ENCODE measurements at regions of chr9 and their contacts with region 1.

Region 1: GRCh38 chr9:21812946-21813568 is 10.6 kb downstream of the MTAP start:
- DNase-seq: peak in 3 of 4 donors; percentile 64 to 87 (median 68)
- ATAC-seq: peak; percentile 92
- H3K4me3 ChIP-seq: no peak overlapping the region
- H3K27ac ChIP-seq: no peak overlapping the region
- H3K4me1 ChIP-seq: peaks cover 0 to 28% of the 10 kb centered on the region in 2 donors
- H3K27me3 ChIP-seq: no peaks in the 10 kb centered on the region
- CTCF ChIP-seq: peak; percentile 82 to 89

Region 2: GRCh38 chr9:21684831-21685362 is 128.2 kb before region 1 on chr9:
- intact Hi-C with region 1: no loop called
- DNase-seq: peak in 2 of 4 donors; percentile 6 to 56
- ATAC-seq: peak; percentile 94
- H3K4me3 ChIP-seq: no peak overlapping the region
- H3K27ac ChIP-seq: no peak overlapping the region
- H3K4me1 ChIP-seq: no peaks in the 10 kb centered on the region
- H3K27me3 ChIP-seq: no peaks in the 10 kb centered on the region
- CTCF ChIP-seq: no peak

Region 3: GRCh38 chr9:21728781-21729180 is 84.3 kb before region 1 on chr9:
- intact Hi-C with region 1: no loop called
- DNase-seq: no peak
- ATAC-seq: no peak
- H3K4me3 ChIP-seq: no peak overlapping the region
- H3K27ac ChIP-seq: no peak overlapping the region
- H3K4me1 ChIP-seq: no peaks in the 10 kb centered on the region
- H3K27me3 ChIP-seq: peaks cover 14 to 59% of the 10 kb centered on the region in 2 donors
- CTCF ChIP-seq: no peak

Region 4: DNA sequence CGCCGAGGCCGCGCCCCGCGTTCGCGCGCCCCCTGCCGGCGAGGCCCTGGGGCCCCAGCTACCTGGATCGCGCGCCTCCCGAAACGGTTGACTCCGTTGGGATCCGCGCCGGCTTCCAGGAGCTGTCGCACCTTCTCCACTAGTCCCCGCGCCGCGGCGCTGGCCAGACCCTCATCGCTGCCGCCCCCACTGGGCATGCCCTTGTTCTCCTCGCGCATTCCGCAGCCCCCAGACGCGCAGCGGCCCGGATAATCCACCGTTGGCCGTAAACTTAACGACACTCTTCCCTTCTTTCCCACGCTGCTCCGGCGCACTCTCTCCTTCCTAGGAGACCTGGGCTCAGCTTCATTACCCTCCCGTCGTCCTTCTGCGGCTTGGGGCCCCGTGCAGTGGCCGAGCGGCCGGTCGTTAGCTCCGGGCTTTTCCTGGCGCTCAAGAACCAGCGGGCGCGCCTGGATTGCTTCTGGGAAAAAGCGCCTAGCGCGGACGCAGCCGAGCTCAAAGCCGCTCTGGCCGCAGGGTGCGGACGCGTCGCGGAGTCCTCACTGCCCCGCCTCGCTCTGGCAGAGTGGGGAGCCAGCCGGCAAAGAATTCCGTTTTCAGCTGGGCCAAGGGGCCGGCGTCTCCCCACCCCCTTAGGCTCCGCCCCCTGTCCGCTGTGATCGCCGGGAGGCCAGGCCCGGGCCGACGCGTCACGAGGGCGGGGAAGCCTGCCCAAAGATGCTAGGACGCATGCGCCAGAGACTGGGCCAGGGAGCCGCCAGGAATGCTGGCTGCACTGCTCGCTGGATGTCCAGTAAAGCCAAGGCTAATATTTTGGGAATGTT is 195.9 kb after region 1 on chr9 and contains the start of gene CDKN2B:
- intact Hi-C with region 1: loop called in 1 of 2 experiments (anchors 10 kb)
- DNase-seq: peak; percentile 66 to 98 (median 93)
- ATAC-seq: peak; percentile 98
- H3K4me3 ChIP-seq: peak within 1 kb of the TSS; percentile 62 to 78
- H3K27ac ChIP-seq: peak within 1 kb of the TSS; percentile 86 to 87
- H3K4me1 ChIP-seq: peaks cover 2 to 31% of the 10 kb centered on the region in 2 donors
- H3K27me3 ChIP-seq: peaks cover 20 to 68% of the 10 kb centered on the region in 2 donors
- CTCF ChIP-seq: peak; percentile 95
- polyA plus RNA-seq, gene CDKN2B: 0.06 to 0.15 (median 0.10) TPM in 5 of 6 donors, not detected in the other

Region 5: GRCh38 chr9:22119537-22120158 is 306.6 kb after region 1 on chr9:
- intact Hi-C with region 1: loop called in 1 of 2 experiments (anchors 10 kb)
- DNase-seq: peak in 1 of 4 donors; percentile 7
- ATAC-seq: peak; percentile 76
- H3K4me3 ChIP-seq: no peak overlapping the region
- H3K27ac ChIP-seq: no peak overlapping the region
- H3K4me1 ChIP-seq: peaks cover 8 to 12% of the 10 kb centered on the region in 2 donors
- H3K27me3 ChIP-seq: no peaks in the 10 kb centered on the region
- CTCF ChIP-seq: peak in 1 of 2 donors; percentile 46

Region 6: DNA sequence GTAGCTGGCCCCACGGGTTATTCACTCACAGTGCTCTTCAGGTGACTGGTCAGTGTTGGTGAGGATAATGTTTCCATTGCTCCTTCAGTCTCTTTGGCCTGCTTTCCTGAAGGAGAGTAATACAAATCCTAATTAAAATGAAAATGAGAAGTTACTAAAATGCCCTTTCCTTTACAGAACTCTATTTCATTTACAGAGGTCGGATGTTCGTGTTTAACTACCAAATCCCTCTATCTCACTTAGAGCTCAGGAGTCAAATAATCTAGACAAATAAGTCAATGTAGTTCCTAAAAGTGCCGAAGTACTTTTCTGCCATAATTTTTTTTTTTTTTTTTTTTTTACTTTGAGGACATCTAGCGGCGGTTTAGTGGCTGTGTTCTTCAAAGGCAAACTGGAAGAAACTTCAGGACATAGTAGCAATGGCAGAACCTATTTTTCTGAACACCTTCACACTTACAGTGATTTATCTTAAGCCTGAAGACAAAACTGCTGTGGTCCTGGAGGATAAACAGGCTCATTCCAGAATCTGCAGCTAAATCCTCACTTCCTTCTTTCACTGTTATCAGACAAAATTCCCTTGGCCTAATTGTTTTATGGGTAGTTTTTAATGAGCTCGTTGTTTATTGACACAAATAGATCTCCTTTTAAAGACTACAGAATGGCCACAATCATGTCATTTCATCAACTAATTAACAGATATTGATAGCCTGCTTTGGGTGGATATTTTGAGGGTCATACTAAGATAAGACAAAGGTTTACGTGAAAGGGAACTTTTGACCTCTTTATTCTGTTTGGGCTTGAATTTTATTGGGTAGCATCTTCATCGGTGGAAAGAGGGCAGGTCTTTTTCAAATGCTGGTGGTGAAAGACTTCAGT is 426.0 kb after region 1 on chr9:
- intact Hi-C with region 1: loop called in 1 of 2 experiments (anchors 5 kb)
- DNase-seq: peak in 2 of 4 donors; percentile 5 to 17
- ATAC-seq: peak; percentile 67
- H3K4me3 ChIP-seq: no peak overlapping the region
- H3K27ac ChIP-seq: no peak overlapping the region
- H3K4me1 ChIP-seq: peaks cover 0 to 13% of the 10 kb centered on the region in 2 donors
- H3K27me3 ChIP-seq: no peaks in the 10 kb centered on the region
- CTCF ChIP-seq: peak; percentile 48 to 52